SK-N-SH (cell line): ENCODE measurements at regions of chr14 and their contacts with region 1.

Region 1: DNA sequence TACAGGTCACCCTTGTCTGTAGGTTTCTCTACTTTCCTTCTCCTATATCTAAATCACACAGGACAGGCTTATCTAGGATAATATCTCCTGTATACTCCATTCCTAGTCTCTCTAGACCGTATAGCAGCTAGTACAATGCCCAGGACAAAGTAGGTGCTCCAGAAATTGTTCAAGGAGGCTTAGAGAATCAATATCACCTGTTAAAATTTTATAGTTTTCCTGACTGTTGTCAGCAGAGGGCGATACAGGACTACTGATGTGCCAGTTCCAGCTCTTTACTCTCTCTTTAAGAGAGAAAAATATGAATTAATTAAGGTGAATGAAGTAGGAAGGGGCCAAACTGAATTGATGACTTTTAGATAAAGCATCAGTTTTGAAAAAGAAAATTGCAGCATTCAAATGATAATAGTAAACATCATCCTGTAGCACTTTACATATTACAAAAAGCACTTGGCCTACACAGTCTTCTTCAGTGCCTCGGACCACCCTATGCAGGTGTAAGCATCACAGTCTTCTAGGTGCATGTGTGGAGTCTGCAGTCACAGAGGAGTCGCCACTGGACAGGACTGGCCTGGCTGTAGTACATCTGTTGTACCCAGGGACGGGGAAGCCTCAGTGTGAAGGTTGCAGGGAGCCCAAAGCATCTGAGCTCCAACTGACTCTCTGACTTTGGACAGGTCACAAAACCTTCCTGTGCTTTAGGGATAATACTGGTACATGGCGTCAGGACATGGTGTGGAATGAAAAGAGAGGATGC is 61.9 kb upstream of the MAX start:
- DNase-seq: peak; percentile 63
- H3K4me3 ChIP-seq: peak overlapping the region in 1 of 2 experiments; percentile 25; a peak in 1 of 4 replicates
- H3K27ac ChIP-seq: no peak overlapping the region
- H3K4me1 ChIP-seq: no peaks in the 10 kb centered on the region
- H3K27me3 ChIP-seq: no peaks in the 10 kb centered on the region
- CTCF ChIP-seq: peak; percentile 88
- EP300 ChIP-seq: no peak
- RAD21 ChIP-seq: peak; percentile 93

Region 2: DNA sequence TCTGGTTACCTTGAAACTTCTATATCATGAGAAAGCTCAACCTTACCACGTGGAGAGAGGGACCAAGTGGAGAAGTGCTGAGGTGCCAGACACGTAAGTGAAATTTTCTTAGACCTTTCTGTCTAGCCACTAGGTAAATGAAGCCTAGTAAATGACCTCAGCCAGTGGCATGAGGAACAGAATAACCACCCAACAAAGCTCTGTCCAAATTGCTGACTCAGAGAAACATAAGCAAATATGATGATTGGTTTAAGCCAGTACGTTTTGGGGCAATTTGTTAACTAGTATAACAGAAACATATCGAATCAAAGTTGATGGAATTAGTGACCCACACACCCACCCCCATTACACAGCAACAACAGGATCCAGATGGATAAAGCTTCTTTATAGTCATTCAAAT is 13.3 kb after region 1 on chr14:
- CTCF ChIA-PET with region 1: interaction called, 23 read pairs
- POLR2A ChIA-PET with region 1: no interaction called
- DNase-seq: no peak
- H3K4me3 ChIP-seq: no peak overlapping the region
- H3K27ac ChIP-seq: no peak overlapping the region
- H3K4me1 ChIP-seq: peaks cover 0 to 12% of the 10 kb centered on the region in 2 experiments; a peak in 2 of 4 replicates
- H3K27me3 ChIP-seq: no peaks in the 10 kb centered on the region
- CTCF ChIP-seq: no peak
- EP300 ChIP-seq: no peak
- RAD21 ChIP-seq: no peak

Region 3: GRCh38 chr14:65184032-65184764 is 20.0 kb after region 1 on chr14:
- CTCF ChIA-PET with region 1: interaction called, 23 read pairs
- POLR2A ChIA-PET with region 1: no interaction called
- DNase-seq: no peak
- H3K4me3 ChIP-seq: no peak overlapping the region
- H3K27ac ChIP-seq: no peak overlapping the region
- H3K4me1 ChIP-seq: peaks cover 3 to 10% of the 10 kb centered on the region in 2 experiments; a peak in 2 of 4 replicates
- H3K27me3 ChIP-seq: no peaks in the 10 kb centered on the region
- CTCF ChIP-seq: no peak
- EP300 ChIP-seq: no peak
- RAD21 ChIP-seq: no peak

Region 4: DNA sequence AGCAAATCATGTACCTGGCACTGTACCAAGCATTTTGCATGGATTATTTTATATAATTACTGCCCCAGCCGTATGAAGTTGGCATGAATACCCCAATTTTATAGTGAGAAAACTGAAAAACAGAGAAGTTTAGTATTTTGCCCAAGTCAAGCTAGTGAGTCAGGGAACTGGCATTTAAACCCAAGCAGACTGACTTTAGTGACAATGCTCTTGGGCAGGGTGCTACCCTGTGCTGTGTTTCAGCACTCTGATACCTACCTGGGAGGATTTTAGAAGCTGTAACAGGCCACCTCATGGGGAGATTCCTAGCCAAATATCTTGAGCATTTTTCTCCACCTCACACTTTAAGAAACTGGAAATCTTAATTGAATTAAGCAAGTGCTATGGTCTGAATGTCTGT is 36.2 kb after region 1 on chr14:
- CTCF ChIA-PET with region 1: interaction called, 10 read pairs
- POLR2A ChIA-PET with region 1: no interaction called
- DNase-seq: no peak
- H3K4me3 ChIP-seq: no peak overlapping the region
- H3K27ac ChIP-seq: no peak overlapping the region
- H3K4me1 ChIP-seq: peaks cover 0 to 8% of the 10 kb centered on the region in 2 experiments; a peak in 2 of 4 replicates
- H3K27me3 ChIP-seq: no peaks in the 10 kb centered on the region
- CTCF ChIP-seq: no peak
- EP300 ChIP-seq: no peak
- RAD21 ChIP-seq: no peak

Region 5: GRCh38 chr14:65412032-65412846 is 248.0 kb after region 1 on chr14 and contains the start of gene FUT8:
- CTCF ChIA-PET with region 1: interaction called, 50 read pairs
- POLR2A ChIA-PET with region 1: interaction called, 3 read pairs
- DNase-seq: peak; percentile 95
- H3K4me3 ChIP-seq: peak within 1 kb of the TSS; percentile 94 to 95
- H3K27ac ChIP-seq: peak within 1 kb of the TSS; percentile 91 to 97
- H3K4me1 ChIP-seq: peaks cover 0 to 6% of the 10 kb centered on the region in 2 experiments; a peak in 2 of 4 replicates
- H3K27me3 ChIP-seq: no peaks in the 10 kb centered on the region
- CTCF ChIP-seq: peak; percentile 65
- EP300 ChIP-seq: peak; percentile 13 to 46; a peak in 2 of 4 replicates
- RAD21 ChIP-seq: peak; percentile 71
- polyA plus RNA-seq, gene FUT8: 31.7 and 32.4 TPM in 2 replicates

Region 6: DNA sequence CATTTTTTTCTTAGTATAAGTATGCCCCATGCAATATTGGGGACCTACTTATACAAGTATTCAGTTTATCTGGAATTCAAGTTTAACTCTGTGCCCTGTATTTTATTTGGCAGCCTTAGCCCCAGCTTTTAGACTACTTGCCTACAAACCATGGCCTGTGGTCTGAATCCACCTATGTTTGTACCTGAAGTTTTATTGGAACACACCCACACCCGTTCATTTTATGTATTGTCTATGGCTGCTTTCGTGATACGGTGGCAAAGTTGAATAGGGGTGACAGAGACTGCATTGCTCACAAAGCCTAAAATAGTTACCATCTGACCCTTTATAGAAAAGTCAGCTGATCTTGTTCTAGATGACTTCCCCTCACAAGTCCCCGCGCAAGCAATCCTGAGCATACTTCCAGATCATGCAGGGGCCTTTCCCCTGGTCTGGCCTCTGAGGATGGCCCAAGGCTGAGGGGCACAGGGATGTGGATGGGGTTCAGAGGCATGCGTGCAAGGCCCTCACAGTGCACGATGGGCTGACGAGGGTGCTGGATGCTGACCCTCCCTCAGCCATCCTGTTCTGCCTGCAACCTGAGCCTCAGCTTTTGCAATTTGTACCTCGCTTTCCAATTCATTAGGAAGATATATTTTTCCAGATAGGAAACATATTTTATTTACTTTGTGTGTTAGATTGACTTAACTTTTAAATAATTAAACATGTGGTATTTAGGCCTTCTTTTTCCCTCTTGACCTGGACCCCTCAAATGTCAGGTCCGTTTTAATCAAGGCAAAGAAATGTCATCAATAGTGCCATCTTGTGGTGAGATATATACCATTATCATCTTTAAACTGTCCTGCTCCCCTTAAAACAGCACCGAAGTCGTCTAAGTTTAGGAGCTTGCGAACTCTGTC is 794.7 kb after region 1 on chr14:
- CTCF ChIA-PET with region 1: interaction called, 54 read pairs
- POLR2A ChIA-PET with region 1: no interaction called
- DNase-seq: peak; percentile 49
- H3K4me3 ChIP-seq: no peak overlapping the region
- H3K27ac ChIP-seq: no peak overlapping the region
- H3K4me1 ChIP-seq: no peaks in the 10 kb centered on the region
- H3K27me3 ChIP-seq: no peaks in the 10 kb centered on the region
- CTCF ChIP-seq: peak; percentile 69
- EP300 ChIP-seq: no peak
- RAD21 ChIP-seq: peak; percentile 65